GM12878 (cell line): ENCODE measurements at regions of chrX and their contacts with region 1.

Region 1: GRCh38 chrX:115330498-115331168 is 41.1 kb downstream of the LUZP4 start:
- DNase-seq: peak; percentile 40
- ATAC-seq: peak; percentile 87
- H3K4me3 ChIP-seq: no peak overlapping the region
- H3K27ac ChIP-seq: no peak overlapping the region
- H3K4me1 ChIP-seq: no peaks in the 10 kb centered on the region
- H3K27me3 ChIP-seq: no peaks in the 10 kb centered on the region
- CTCF ChIP-seq: peak; percentile 75 to 86 (median 78)
- EP300 ChIP-seq: no peak
- POLR2A ChIP-seq: no peak
- RAD21 ChIP-seq: peak; percentile 92

Region 2: GRCh38 chrX:114997776-114998175 is 332.9 kb before region 1 on chrX:
- CTCF ChIA-PET with region 1: no interaction called
- POLR2A ChIA-PET with region 1: no interaction called
- RAD21 ChIA-PET with region 1: no interaction called
- SMC1A ChIA-PET with region 1: no interaction called
- in situ Hi-C with region 1: no loop called
- intact Hi-C with region 1: no loop called
- DNase-seq: no peak
- ATAC-seq: no peak
- H3K4me3 ChIP-seq: no peak overlapping the region
- H3K27ac ChIP-seq: no peak overlapping the region
- H3K4me1 ChIP-seq: no peaks in the 10 kb centered on the region
- H3K27me3 ChIP-seq: no peaks in the 10 kb centered on the region
- CTCF ChIP-seq: no peak
- EP300 ChIP-seq: no peak
- POLR2A ChIP-seq: no peak
- RAD21 ChIP-seq: no peak

Region 3: GRCh38 chrX:115089419-115089818 is 241.2 kb before region 1 on chrX:
- CTCF ChIA-PET with region 1: no interaction called
- POLR2A ChIA-PET with region 1: no interaction called
- RAD21 ChIA-PET with region 1: no interaction called
- SMC1A ChIA-PET with region 1: no interaction called
- in situ Hi-C with region 1: no loop called
- intact Hi-C with region 1: no loop called
- DNase-seq: no peak
- ATAC-seq: no peak
- H3K4me3 ChIP-seq: no peak overlapping the region
- H3K27ac ChIP-seq: no peak overlapping the region
- H3K4me1 ChIP-seq: no peaks in the 10 kb centered on the region
- H3K27me3 ChIP-seq: no peaks in the 10 kb centered on the region
- CTCF ChIP-seq: no peak
- EP300 ChIP-seq: no peak
- POLR2A ChIP-seq: no peak
- RAD21 ChIP-seq: no peak

Region 4: DNA sequence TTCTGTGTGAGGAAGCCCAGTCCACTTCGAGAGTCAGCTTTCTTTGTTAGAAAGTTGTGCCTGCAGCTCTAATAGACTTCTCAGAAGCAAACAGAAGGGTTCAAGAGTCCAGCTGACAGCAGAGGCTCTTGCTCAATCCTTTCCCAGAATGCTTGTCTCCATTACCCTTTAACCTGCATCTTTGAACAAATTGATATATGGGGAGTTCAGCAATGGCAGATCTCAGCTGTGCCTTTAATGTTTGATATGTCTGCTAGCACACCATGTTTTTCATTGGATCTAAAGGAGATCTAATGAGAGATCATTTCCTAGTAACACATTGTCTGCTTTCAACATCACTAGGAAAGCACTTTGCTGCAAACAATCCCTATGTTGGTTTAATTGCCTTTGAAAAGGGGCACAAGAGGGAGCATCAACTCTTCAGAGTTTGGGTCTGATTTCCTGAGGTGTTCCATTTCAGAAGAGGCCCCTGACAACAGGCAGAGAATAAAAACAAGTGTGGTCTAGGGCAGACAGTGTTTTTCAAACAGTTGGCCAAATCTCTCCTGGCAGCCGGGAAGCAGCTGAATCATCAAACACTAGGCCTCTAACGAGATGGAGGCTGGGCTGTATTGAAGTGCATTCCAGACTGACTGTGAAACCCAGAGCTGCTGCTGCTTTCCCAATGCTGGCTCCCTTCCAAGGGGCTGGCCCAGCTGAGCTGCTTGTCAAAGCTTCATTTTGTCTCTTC is 14.4 kb after region 1 on chrX:
- CTCF ChIA-PET with region 1: interaction called, 10 read pairs
- POLR2A ChIA-PET with region 1: no interaction called
- RAD21 ChIA-PET with region 1: interaction called, 3 read pairs
- SMC1A ChIA-PET with region 1: interaction called, 13 read pairs
- in situ Hi-C with region 1: no loop called
- intact Hi-C with region 1: no loop called
- DNase-seq: no peak
- ATAC-seq: no peak
- H3K4me3 ChIP-seq: no peak overlapping the region
- H3K27ac ChIP-seq: no peak overlapping the region
- H3K4me1 ChIP-seq: no peaks in the 10 kb centered on the region
- H3K27me3 ChIP-seq: no peaks in the 10 kb centered on the region; a peak in 1 of 4 replicates
- CTCF ChIP-seq: no peak
- EP300 ChIP-seq: no peak
- POLR2A ChIP-seq: no peak
- RAD21 ChIP-seq: no peak

Region 5: GRCh38 chrX:115560978-115561604 is 230.5 kb after region 1 on chrX and contains the start of gene PLS3:
- CTCF ChIA-PET with region 1: interaction called, 62 read pairs
- POLR2A ChIA-PET with region 1: interaction called, 3 read pairs
- RAD21 ChIA-PET with region 1: interaction called, 50 read pairs
- SMC1A ChIA-PET with region 1: interaction called, 79 read pairs
- in situ Hi-C with region 1: loop called (anchors 10 kb)
- intact Hi-C with region 1: loop called (anchors 1 kb)
- DNase-seq: no peak
- ATAC-seq: peak; percentile 76
- H3K4me3 ChIP-seq: peak within 1 kb of the TSS; percentile 25
- H3K27ac ChIP-seq: peak within 1 kb of the TSS; percentile 42; the same call in 1 of the 2 replicates
- H3K4me1 ChIP-seq: no peaks in the 10 kb centered on the region
- H3K27me3 ChIP-seq: peaks cover 0 to 3% of the 10 kb centered on the region in 2 experiments; a peak in 3 of 4 replicates
- CTCF ChIP-seq: no peak
- EP300 ChIP-seq: no peak
- POLR2A ChIP-seq: no peak
- RAD21 ChIP-seq: no peak
- polyA plus RNA-seq, gene PLS3: 122 to 169 TPM

Region 6: GRCh38 chrX:115650916-115651315 is 320.3 kb after region 1 on chrX:
- CTCF ChIA-PET with region 1: interaction called, 216 read pairs
- POLR2A ChIA-PET with region 1: no interaction called
- RAD21 ChIA-PET with region 1: interaction called, 22 read pairs
- SMC1A ChIA-PET with region 1: interaction called, 135 read pairs
- in situ Hi-C with region 1: loop called (anchors 5 kb)
- intact Hi-C with region 1: no loop called
- DNase-seq: peak; percentile 17
- ATAC-seq: peak; percentile 84
- H3K4me3 ChIP-seq: no peak overlapping the region
- H3K27ac ChIP-seq: no peak overlapping the region
- H3K4me1 ChIP-seq: no peaks in the 10 kb centered on the region
- H3K27me3 ChIP-seq: no peaks in the 10 kb centered on the region
- CTCF ChIP-seq: peak; percentile 61 to 72 (median 68)
- EP300 ChIP-seq: no peak
- POLR2A ChIP-seq: no peak
- RAD21 ChIP-seq: peak; percentile 78

Region 7: GRCh38 chrX:115690511-115691216 is 360.0 kb after region 1 on chrX:
- CTCF ChIA-PET with region 1: interaction called, 34 read pairs
- POLR2A ChIA-PET with region 1: interaction called, 3 read pairs
- RAD21 ChIA-PET with region 1: interaction called, 40 read pairs
- SMC1A ChIA-PET with region 1: interaction called, 22 read pairs
- in situ Hi-C with region 1: no loop called
- intact Hi-C with region 1: loop called (anchors 5 kb)
- DNase-seq: peak; percentile 23
- ATAC-seq: peak; percentile 97
- H3K4me3 ChIP-seq: no peak overlapping the region
- H3K27ac ChIP-seq: no peak overlapping the region
- H3K4me1 ChIP-seq: no peaks in the 10 kb centered on the region
- H3K27me3 ChIP-seq: no peaks in the 10 kb centered on the region
- CTCF ChIP-seq: peak; percentile 70 to 87 (median 83)
- EP300 ChIP-seq: no peak
- POLR2A ChIP-seq: no peak
- RAD21 ChIP-seq: peak; percentile 63